ENCODE measurements at regions of chr10 and their contacts with region 1.

Region 1: DNA sequence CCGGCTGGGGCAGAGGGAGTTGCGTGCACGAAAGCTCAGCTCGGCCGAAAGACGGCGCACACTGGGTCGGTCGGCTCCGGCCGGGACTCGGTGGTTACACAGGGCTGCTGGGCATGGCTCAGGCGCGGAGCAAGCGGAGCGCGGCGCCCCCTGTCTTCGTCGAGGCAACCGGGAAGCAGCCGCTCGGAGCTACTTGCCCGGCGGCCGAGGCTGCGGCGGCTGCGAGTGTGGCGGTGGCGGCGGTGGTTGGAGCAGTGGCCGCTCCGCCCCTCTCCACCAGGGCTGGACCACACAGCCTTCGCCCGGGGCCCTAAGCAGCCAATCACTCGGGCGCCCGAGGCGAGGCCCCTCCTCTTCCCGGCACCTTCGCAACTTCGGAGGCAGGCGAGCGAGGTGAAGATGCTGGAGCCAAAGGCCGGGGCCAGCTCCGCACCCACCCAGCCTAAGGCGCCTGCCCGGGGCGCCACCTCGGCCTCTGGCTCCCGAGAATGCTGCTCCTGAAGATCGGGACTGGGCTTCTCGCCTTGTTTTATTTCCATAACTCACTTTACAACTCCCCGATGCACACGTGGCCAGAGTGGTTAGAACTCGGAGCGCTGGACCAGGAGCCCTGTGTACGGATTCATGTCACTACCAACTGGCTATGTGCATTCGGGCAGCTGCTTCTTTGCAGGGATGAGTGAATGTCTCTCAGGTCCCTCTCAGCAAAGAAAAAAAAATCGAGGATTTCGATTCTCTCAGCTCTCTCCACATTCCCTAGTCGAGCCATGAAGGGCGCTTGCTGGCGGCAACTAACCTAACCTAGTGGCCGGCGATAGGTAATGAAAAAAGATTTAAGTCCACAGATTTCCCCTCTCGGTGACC is at the start of gene TLL2:
- DNase-seq: peak; percentile 87
- H3K4me3 Mint-ChIP-seq: peak within 1 kb of the TSS; percentile 54
- H3K27ac Mint-ChIP-seq: no peak within 1 kb of the TSS
- H3K4me1 Mint-ChIP-seq: peaks cover 8% of the 10 kb centered on the region
- H3K27me3 Mint-ChIP-seq: no peaks in the 10 kb centered on the region
- CTCF ChIP-seq: peak; percentile 30
- total RNA-seq, gene TLL2: 0.20 TPM in 1 of 2 replicates, not detected in the other

Region 2: DNA sequence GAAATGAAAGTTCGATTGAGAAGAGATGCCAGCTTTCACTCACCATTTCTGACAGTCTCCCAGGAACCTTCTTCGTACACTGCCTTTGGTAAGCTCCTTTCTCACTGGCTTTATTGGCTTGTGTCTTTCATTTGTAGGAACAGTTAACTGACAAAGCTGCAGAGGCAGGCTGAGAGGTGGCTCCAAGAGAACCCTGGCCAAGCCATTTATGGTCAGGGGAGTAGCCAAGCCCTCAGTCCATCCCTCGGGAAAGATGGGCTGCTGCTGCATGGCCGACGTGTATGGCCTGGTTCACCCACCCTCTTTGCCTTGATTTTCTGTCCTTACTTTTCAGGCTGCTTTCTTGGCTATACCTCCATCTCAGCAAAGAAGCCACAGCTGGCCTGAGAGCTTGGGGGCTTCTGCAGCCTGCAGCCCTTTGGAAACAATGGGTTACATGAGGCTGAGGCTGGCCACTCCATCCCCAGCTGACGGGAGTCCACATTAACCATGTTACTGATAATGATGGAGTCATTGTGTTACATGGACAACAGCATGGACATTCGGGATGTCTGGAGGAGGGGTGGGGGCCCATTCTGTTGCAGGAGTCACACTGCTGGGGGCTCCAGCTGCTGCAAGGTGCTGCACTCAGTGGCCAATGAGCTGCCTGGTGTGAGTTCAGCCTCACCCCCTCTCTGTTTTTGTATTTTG is 154.9 kb before region 1 on chr10 and contains the start of gene OPALIN:
- CTCF ChIA-PET with region 1: no interaction called
- POLR2A ChIA-PET with region 1: no interaction called
- intact Hi-C with region 1: no loop called
- DNase-seq: no peak
- H3K4me3 Mint-ChIP-seq: no peak within 1 kb of the TSS
- H3K27ac Mint-ChIP-seq: no peak within 1 kb of the TSS
- H3K4me1 Mint-ChIP-seq: no peaks in the 10 kb centered on the region
- H3K27me3 Mint-ChIP-seq: peaks cover 31% of the 10 kb centered on the region
- CTCF ChIP-seq: no peak
- total RNA-seq, gene OPALIN: not detected in 2 replicates

Region 3: DNA sequence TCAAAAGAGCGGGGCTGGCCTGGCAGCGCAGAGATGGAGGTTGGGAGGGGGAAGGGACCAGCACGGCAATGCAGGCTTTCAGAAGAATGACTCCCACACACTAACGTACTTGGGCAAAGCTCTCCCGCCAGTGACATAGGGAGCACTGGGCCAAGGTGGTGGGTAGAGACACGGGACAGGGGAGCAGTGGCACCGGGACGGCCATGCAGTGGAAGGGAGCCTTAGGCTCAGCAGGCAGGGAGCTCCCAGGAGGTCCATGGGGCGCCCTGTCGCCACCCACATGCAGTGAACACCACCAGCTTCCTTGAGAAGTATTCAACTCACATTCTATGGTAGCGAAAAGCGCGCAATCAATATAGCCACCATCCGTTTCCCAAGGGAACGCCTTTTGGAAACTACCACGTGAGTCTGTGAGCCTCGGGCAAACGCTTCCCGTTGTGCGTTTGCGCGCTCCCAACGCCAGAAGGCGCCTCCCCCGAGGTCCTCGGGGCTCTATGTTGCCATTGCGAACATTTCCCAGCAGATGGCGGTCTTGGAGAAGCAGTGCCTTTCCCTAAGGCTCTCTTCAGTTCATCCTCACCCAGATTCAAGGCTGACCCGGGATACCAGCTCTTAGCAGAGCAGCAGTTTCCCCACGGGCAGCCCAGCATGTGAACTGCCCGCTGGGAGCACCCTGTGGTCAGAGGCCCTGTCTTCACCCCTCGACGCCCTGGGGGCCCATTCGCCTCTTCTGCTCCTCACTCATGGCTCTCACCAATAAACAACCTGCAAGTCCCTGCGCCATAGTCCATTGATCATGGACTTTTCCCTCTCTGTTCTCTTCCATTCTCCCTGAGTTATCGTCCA is 138.7 kb before region 1 on chr10:
- CTCF ChIA-PET with region 1: interaction called, 56 read pairs
- POLR2A ChIA-PET with region 1: interaction called, 3 read pairs
- intact Hi-C with region 1: loop called (anchors 1 kb)
- DNase-seq: peak; percentile 94
- H3K4me3 Mint-ChIP-seq: peak overlapping the region; percentile 66
- H3K27ac Mint-ChIP-seq: no peak overlapping the region
- H3K4me1 Mint-ChIP-seq: peaks cover 15% of the 10 kb centered on the region
- H3K27me3 Mint-ChIP-seq: no peaks in the 10 kb centered on the region
- CTCF ChIP-seq: peak; percentile 95

Region 4: DNA sequence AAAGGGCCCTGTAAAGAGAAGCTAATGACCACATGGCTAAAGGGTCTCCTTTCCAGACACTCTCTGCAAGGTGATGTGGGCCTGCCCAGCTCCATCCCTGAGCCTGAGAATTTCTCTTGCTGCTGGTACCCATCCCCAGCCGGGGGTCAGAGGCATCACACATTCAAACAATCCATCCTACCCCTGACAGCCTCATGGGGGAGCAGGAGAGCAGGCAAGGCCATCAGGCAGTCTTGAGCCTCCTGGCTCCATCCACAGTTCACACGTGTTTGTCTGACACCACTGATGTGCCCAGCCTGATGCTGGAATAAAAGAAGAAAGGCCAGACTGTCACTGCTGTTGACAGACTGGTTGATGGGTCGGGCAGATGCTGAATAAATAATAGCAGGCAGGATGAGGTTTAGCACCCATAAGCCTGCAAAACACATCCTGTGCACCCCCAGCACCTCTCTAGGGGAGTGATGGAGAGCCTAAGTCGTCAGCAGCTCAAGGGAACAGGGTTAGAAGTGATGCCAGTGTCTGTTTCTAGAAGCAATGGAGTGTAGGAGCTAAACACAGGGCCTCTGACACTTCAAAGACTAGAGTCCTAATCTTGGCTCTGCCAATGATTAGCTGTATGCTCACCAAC is 43.7 kb before region 1 on chr10:
- CTCF ChIA-PET with region 1: interaction called, 12 read pairs
- POLR2A ChIA-PET with region 1: no interaction called
- intact Hi-C with region 1: loop called (anchors 1 kb)
- DNase-seq: peak; percentile 66
- H3K4me3 Mint-ChIP-seq: no peak overlapping the region
- H3K27ac Mint-ChIP-seq: no peak overlapping the region
- H3K4me1 Mint-ChIP-seq: no peaks in the 10 kb centered on the region
- H3K27me3 Mint-ChIP-seq: peaks cover 55% of the 10 kb centered on the region
- CTCF ChIP-seq: peak; percentile 44

Region 5: DNA sequence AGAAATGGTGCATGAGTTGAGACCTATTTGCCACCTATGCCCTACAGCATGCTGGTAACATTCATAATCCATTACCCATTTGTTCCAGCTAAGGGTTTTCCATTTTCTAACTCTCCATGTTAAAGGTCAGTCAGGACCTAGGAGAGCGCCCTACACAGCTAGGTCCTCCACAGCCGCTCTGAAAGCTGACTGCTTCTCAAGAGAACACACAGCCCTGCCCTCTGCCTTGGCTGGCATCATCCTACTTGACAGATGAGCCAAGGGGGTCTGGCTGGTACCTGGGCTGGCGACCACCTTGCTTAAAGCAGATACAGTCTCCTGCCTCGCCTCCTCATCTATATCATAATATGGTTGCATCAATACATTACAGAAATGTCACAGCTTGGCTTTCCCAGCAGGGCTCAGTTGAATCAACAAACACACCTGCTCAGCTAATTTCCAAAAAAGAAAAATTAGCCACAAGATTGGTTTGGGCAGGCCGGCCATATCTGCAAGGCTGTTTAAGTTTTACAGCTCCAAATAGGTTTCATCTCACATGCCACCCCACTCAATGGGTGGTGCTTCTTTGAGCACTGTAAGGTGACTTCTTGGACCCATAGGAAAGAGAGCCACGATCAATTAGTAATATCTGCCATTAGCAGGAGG is 17.5 kb before region 1 on chr10:
- CTCF ChIA-PET with region 1: interaction called, 36 read pairs
- POLR2A ChIA-PET with region 1: interaction called, 13 read pairs
- intact Hi-C with region 1: no loop called
- DNase-seq: peak; percentile 47
- H3K4me3 Mint-ChIP-seq: no peak overlapping the region
- H3K27ac Mint-ChIP-seq: no peak overlapping the region
- H3K4me1 Mint-ChIP-seq: no peaks in the 10 kb centered on the region
- H3K27me3 Mint-ChIP-seq: peaks cover 11% of the 10 kb centered on the region
- CTCF ChIP-seq: no peak

Region 6: GRCh38 chr10:96532496-96532895 is 18.6 kb after region 1 on chr10:
- CTCF ChIA-PET with region 1: interaction called, 29 read pairs
- POLR2A ChIA-PET with region 1: interaction called, 5 read pairs
- intact Hi-C with region 1: no loop called
- DNase-seq: peak; percentile 39
- H3K4me3 Mint-ChIP-seq: no peak overlapping the region
- H3K27ac Mint-ChIP-seq: no peak overlapping the region
- H3K4me1 Mint-ChIP-seq: no peaks in the 10 kb centered on the region
- H3K27me3 Mint-ChIP-seq: no peaks in the 10 kb centered on the region
- CTCF ChIP-seq: no peak

Region 7: GRCh38 chr10:96772194-96772593 is 258.3 kb after region 1 on chr10:
- CTCF ChIA-PET with region 1: interaction called, 10 read pairs
- POLR2A ChIA-PET with region 1: no interaction called
- intact Hi-C with region 1: no loop called
- DNase-seq: no peak
- H3K4me3 Mint-ChIP-seq: no peak overlapping the region
- H3K27ac Mint-ChIP-seq: no peak overlapping the region
- H3K4me1 Mint-ChIP-seq: no peaks in the 10 kb centered on the region
- H3K27me3 Mint-ChIP-seq: no peaks in the 10 kb centered on the region
- CTCF ChIP-seq: no peak